ENCODE measurements at regions of chr4 and their contacts with region 1.

Region 1: DNA sequence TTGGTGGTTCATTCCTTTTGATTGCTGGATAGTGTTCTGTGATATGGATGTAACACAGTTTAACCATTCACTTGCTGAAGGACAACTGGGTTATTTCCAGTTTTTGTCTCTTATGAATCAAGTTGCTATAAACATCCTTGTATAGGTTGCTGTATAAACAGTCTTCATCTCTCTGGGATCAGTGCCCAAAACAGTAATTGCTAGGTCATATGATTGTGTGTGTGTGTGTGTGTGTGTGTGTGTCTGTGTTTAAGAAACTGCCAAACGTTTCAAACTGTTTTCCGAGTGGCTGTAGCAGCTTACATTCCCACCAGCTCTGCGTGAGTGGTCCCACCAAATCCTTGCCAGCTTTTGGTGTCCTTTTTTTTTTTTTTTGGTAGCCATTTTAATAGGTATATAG is 60.4 kb downstream of the F11 start:
- DNase-seq: no peak
- ATAC-seq: no peak
- H3K4me3 ChIP-seq: no peak overlapping the region
- H3K27ac ChIP-seq: no peak overlapping the region
- H3K4me1 ChIP-seq: no peaks in the 10 kb centered on the region
- H3K27me3 ChIP-seq: 0 out of 5 replicates have a peak, but pooled peaks cover 0 to 4% of the 10 kb centered on the region in 2 experiments
- CTCF ChIP-seq: no peak
- EP300 ChIP-seq: no peak
- POLR2A ChIP-seq: no peak
- RAD21 ChIP-seq: no peak

Region 2: GRCh38 chr4:186341655-186342054 is 15.3 kb after region 1 on chr4:
- CTCF ChIA-PET with region 1: no interaction called
- POLR2A ChIA-PET with region 1: no interaction called
- in situ Hi-C with region 1: no loop called
- intact Hi-C with region 1: no loop called
- DNase-seq: no peak
- ATAC-seq: no peak
- H3K4me3 ChIP-seq: no peak overlapping the region
- H3K27ac ChIP-seq: no peak overlapping the region
- H3K4me1 ChIP-seq: no peaks in the 10 kb centered on the region
- H3K27me3 ChIP-seq: peaks cover 0 to 33% of the 10 kb centered on the region in 2 experiments; a peak in 3 of 5 replicates
- CTCF ChIP-seq: no peak
- EP300 ChIP-seq: no peak
- POLR2A ChIP-seq: no peak
- RAD21 ChIP-seq: no peak

Region 3: DNA sequence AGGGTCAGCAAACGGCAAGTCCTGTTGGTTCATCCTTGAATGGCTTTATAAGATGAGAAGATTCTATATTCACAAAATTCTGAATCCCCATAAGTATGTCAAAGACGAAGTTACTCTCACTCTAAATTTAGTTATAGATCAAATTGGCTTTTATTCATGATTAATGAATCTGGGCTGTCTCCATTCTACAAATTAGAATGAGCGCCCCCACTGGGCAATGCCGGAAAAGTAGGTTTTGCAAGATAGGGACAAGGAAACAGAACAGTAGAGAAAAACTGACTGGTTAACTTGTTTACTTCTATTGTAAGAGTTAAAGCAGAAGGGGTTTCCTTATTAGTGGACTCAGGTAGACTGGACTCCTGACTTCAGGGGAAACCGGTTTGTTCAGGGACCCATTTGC is 39.9 kb after region 1 on chr4:
- CTCF ChIA-PET with region 1: no interaction called
- POLR2A ChIA-PET with region 1: no interaction called
- in situ Hi-C with region 1: no loop called
- intact Hi-C with region 1: no loop called
- DNase-seq: no peak
- ATAC-seq: no peak
- H3K4me3 ChIP-seq: no peak overlapping the region
- H3K27ac ChIP-seq: no peak overlapping the region
- H3K4me1 ChIP-seq: no peaks in the 10 kb centered on the region
- H3K27me3 ChIP-seq: 0 out of 5 replicates have a peak, but pooled peaks cover 0 to 3% of the 10 kb centered on the region in 2 experiments
- CTCF ChIP-seq: no peak
- EP300 ChIP-seq: no peak
- POLR2A ChIP-seq: no peak
- RAD21 ChIP-seq: no peak

Region 4: GRCh38 chr4:186416451-186417060 is 90.2 kb after region 1 on chr4:
- CTCF ChIA-PET with region 1: no interaction called
- POLR2A ChIA-PET with region 1: no interaction called
- in situ Hi-C with region 1: no loop called
- intact Hi-C with region 1: no loop called
- DNase-seq: no peak
- ATAC-seq: no peak
- H3K4me3 ChIP-seq: no peak overlapping the region
- H3K27ac ChIP-seq: no peak overlapping the region
- H3K4me1 ChIP-seq: no peaks in the 10 kb centered on the region
- H3K27me3 ChIP-seq: peaks cover 1 to 27% of the 10 kb centered on the region in 2 experiments
- CTCF ChIP-seq: no peak
- EP300 ChIP-seq: no peak
- POLR2A ChIP-seq: no peak
- RAD21 ChIP-seq: no peak

Region 5: DNA sequence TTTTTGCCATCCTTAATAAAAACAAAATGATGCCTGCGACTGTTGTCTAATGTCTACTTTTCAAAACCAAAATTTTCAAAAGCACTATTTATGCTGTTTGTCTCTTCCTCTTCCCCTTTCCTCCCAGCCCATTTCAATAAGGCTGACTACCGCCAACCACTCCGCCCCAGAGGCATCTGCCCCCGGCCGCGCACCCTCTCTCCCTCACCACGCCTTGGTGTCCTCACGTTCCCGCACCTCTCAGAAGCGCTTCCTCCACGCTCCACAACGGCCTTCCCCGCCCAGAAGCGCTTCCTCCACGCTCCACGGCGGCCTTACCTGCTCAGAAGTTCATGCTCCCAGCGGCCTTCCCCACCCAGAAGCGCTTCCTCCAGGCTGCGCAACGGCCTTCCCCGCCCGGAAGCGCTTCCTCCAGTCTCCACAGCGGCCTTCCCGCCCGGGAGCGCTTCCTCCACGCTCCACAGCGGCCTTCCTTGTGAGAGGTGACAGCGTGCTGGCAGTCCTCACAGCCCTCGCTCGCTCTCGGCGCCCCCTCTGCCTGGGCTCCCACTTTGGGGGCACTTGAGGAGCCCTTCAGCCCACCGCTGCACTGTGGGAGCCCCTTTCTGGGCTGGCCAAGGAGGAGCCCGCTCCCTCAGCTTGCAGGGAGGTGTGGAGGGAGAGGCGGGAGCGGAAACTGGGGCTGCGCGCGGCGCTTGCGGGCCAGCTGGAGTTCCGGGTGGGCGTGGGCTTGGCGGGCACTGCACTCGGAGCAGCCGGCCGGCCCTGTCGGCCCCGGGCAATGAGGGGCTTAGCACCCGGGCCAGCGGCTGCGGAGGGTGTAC is 1178.8 kb after region 1 on chr4:
- CTCF ChIA-PET with region 1: no interaction called
- POLR2A ChIA-PET with region 1: no interaction called
- in situ Hi-C with region 1: no loop called
- intact Hi-C with region 1: loop called (anchors 5 kb)
- DNase-seq: no peak
- ATAC-seq: no peak
- H3K4me3 ChIP-seq: no peak overlapping the region
- H3K27ac ChIP-seq: no peak overlapping the region
- H3K4me1 ChIP-seq: no peaks in the 10 kb centered on the region
- H3K27me3 ChIP-seq: peaks cover 0 to 7% of the 10 kb centered on the region in 2 experiments; a peak in 1 of 5 replicates
- CTCF ChIP-seq: no peak
- EP300 ChIP-seq: no peak
- POLR2A ChIP-seq: no peak
- RAD21 ChIP-seq: no peak

Measured in HepG2 (cell line).